Heart left ventricle (tissue), 16 donors: ENCODE measurements at regions of chr16 and their contacts with region 1.

Region 1: GRCh38 chr16:10181196-10182162 is 749 bp downstream of the GRIN2A start:
- DNase-seq: peak; percentile 44 to 76 (median 54)
- ATAC-seq: peak; percentile 56 to 95 (median 88)
- H3K4me3 ChIP-seq: peak overlapping the region in 11 of 12 donors; percentile 17 to 47 (median 30)
- H3K27ac ChIP-seq: no peak overlapping the region
- H3K4me1 ChIP-seq: peaks cover 0 to 28% (median 16%) of the 10 kb centered on the region in 12 donors
- H3K27me3 ChIP-seq: peaks cover 24 to 81% (median 53%) of the 10 kb centered on the region in 9 donors
- CTCF ChIP-seq: peak; percentile 79 to 98 (median 90)
- POLR2A ChIP-seq: no peak

Region 2: GRCh38 chr16:9134739-9135138 is 1046.7 kb before region 1 on chr16:
- intact Hi-C with region 1: loop called in 2 of 10 experiments (anchors 2 to 10 kb)
- DNase-seq: peak; percentile 26 to 75 (median 50)
- ATAC-seq: peak in 3 of 4 donors; percentile 63 to 72 (median 70)
- H3K4me3 ChIP-seq: no peak overlapping the region
- H3K27ac ChIP-seq: no peak overlapping the region
- H3K4me1 ChIP-seq: peaks cover 0 to 21% (median 6%) of the 10 kb centered on the region in 12 donors
- H3K27me3 ChIP-seq: no peaks in the 10 kb centered on the region
- CTCF ChIP-seq: peak; percentile 12 to 60 (median 47)
- POLR2A ChIP-seq: no peak

Region 3: GRCh38 chr16:9258423-9259051 is 922.9 kb before region 1 on chr16:
- intact Hi-C with region 1: loop called in 7 of 10 experiments (anchors 1 to 10 kb)
- DNase-seq: peak in 4 of 5 donors; percentile 11 to 33 (median 28)
- ATAC-seq: peak in 1 of 4 donors; percentile 54
- H3K4me3 ChIP-seq: no peak overlapping the region
- H3K27ac ChIP-seq: no peak overlapping the region
- H3K4me1 ChIP-seq: peaks cover 0 to 9% (median 0%) of the 10 kb centered on the region in 12 donors
- H3K27me3 ChIP-seq: peaks cover 0 to 10% (median 0%) of the 10 kb centered on the region in 9 donors
- CTCF ChIP-seq: peak; percentile 51 to 79 (median 68)
- POLR2A ChIP-seq: no peak

Region 4: GRCh38 chr16:9647981-9648712 is 533.3 kb before region 1 on chr16:
- intact Hi-C with region 1: loop called (anchors 2 to 10 kb)
- DNase-seq: no peak
- ATAC-seq: peak in 3 of 4 donors; percentile 32 to 58 (median 54)
- H3K4me3 ChIP-seq: no peak overlapping the region
- H3K27ac ChIP-seq: no peak overlapping the region
- H3K4me1 ChIP-seq: no peaks in the 10 kb centered on the region
- H3K27me3 ChIP-seq: peaks cover 0 to 3% (median 0%) of the 10 kb centered on the region in 9 donors
- CTCF ChIP-seq: peak; percentile 54 to 81 (median 72)
- POLR2A ChIP-seq: no peak

Region 5: GRCh38 chr16:10122546-10122945 is 58.9 kb before region 1 on chr16:
- intact Hi-C with region 1: no loop called
- DNase-seq: no peak
- ATAC-seq: no peak
- H3K4me3 ChIP-seq: no peak overlapping the region
- H3K27ac ChIP-seq: no peak overlapping the region
- H3K4me1 ChIP-seq: peaks cover 0 to 6% (median 0%) of the 10 kb centered on the region in 12 donors
- H3K27me3 ChIP-seq: peaks cover 0 to 24% (median 0%) of the 10 kb centered on the region in 9 donors
- CTCF ChIP-seq: peak in 7 of 12 donors; percentile 13 to 38 (median 27)
- POLR2A ChIP-seq: no peak